ENCODE measurements at regions of chr5 and their contacts with region 1.

Region 1: DNA sequence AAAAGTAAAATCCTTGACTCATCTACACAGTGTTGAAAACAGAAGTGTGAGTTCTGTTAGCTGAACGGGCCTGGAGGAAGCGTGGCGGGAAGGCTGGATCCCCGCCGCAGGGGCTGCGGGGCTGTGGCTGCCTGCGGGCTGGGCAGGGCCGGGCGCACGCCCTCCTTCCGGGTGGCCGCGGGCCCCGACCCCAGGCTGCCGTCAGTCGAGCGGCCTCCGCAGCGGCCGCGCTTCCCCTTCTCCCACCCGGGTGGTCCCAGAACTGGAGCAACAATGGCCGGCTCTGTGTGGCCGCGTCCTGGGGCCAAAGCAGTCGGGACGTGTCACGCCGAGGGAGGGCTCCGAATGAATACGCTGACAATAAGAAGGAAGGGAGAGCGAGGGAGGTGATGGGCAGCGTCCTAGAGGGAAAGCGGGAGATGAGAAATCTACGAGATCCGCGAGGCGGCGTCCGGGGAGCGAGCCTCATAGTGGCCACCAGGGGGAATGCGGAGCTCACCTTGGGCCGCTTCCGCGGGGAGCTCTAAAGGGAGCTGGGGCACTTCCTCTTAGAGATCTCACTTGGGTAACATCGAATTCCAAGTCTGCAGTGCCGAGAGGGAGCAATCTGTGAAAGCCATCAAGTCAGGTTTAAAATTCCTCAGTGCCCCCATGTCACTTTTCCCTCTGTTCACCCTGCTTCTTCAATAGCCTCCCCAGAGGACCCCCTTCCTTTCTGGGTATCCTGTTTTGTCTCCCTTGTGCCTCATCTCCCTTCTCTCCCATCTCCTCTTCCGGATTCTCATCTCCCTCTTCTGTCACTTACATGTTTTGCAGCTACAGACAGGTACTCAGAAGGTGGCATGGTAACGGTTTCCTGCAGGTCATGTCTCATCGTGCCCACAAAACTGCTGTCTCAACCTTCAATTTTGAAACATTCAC is 83.9 kb downstream of the SLC1A3 start:
- DNase-seq: peak; percentile 81
- H3K4me3 ChIP-seq: peak overlapping the region; percentile 41 to 70 (median 55)
- H3K27ac ChIP-seq: peak overlapping the region; percentile 54
- H3K4me1 ChIP-seq: peaks cover 22% of the 10 kb centered on the region
- H3K27me3 ChIP-seq: no peaks in the 10 kb centered on the region
- CTCF ChIP-seq: peak; percentile 89 to 94

Region 2: GRCh38 chr5:36264202-36264760 is 426.0 kb before region 1 on chr5:
- CTCF ChIA-PET with region 1: no interaction called
- dilution Hi-C with region 1: no loop called
- in situ Hi-C with region 1: loop called (anchors 10 kb)
- intact Hi-C with region 1: loop called (anchors 2 kb)
- DNase-seq: no peak
- H3K4me3 ChIP-seq: no peak overlapping the region
- H3K27ac ChIP-seq: no peak overlapping the region
- H3K4me1 ChIP-seq: peaks cover 3% of the 10 kb centered on the region
- H3K27me3 ChIP-seq: no peaks in the 10 kb centered on the region
- CTCF ChIP-seq: no peak

Region 3: DNA sequence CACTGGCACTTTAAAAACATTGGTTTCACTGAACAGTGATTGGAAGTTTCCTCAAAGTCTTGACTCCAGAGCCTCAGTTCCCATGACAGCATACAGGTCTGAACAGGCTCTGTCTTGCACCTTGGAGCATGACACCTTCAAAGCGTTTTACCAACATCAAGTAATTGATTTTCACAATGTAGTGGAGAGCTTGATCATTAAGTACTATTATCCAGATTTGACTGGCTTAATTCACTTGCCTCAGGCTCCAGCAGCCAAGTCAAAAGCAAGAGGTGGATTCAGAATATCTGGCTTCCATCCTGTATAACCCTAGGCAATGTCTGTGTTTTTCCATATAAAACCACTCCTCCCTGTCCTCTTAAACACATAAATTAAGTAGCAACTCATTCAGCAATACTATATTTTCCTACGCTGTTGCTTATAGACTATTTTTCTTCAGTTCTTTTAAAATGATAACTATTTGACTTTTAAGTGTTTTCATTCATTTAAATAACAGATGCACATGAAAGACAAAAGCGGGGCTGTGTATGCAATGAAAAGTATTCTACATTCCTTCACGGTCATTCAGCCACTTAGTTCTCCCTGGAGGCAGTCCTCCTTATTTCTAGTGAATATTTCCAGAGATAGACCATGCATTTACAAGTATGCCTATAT is 237.8 kb before region 1 on chr5:
- CTCF ChIA-PET with region 1: no interaction called
- dilution Hi-C with region 1: no loop called
- in situ Hi-C with region 1: no loop called
- intact Hi-C with region 1: loop called (anchors 1 kb)
- DNase-seq: peak; percentile 89
- H3K4me3 ChIP-seq: peak overlapping the region in 2 of 3 experiments; percentile 12 to 23
- H3K27ac ChIP-seq: peak overlapping the region; percentile 87
- H3K4me1 ChIP-seq: peaks cover 53% of the 10 kb centered on the region
- H3K27me3 ChIP-seq: no peaks in the 10 kb centered on the region
- CTCF ChIP-seq: no peak

Region 4: DNA sequence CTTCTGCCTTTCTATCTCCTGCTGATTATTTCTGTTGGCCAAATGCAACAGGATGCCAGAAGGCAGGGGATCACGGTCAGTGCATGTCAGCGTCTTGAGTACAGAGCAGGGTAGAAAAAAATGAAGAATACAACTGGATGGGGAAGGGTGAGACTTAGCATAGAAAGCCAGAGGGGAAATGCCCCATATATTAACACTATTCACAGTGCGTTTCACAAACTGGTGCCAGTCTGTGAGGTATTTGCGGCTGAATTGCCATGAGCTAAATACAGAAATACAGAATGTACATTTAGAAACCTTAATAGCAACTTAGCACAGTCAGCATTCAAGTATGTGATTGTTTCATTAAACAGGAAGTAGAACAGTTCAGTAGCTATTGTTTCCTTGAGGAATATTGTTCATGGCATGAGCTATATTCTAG is 114.9 kb before region 1 on chr5:
- CTCF ChIA-PET with region 1: interaction called, 4 read pairs
- dilution Hi-C with region 1: no loop called
- in situ Hi-C with region 1: no loop called
- intact Hi-C with region 1: loop called (anchors 1 kb)
- DNase-seq: peak; percentile 80
- H3K4me3 ChIP-seq: no peak overlapping the region
- H3K27ac ChIP-seq: peak overlapping the region; percentile 84
- H3K4me1 ChIP-seq: peaks cover 43% of the 10 kb centered on the region
- H3K27me3 ChIP-seq: no peaks in the 10 kb centered on the region
- CTCF ChIP-seq: no peak

Region 5: DNA sequence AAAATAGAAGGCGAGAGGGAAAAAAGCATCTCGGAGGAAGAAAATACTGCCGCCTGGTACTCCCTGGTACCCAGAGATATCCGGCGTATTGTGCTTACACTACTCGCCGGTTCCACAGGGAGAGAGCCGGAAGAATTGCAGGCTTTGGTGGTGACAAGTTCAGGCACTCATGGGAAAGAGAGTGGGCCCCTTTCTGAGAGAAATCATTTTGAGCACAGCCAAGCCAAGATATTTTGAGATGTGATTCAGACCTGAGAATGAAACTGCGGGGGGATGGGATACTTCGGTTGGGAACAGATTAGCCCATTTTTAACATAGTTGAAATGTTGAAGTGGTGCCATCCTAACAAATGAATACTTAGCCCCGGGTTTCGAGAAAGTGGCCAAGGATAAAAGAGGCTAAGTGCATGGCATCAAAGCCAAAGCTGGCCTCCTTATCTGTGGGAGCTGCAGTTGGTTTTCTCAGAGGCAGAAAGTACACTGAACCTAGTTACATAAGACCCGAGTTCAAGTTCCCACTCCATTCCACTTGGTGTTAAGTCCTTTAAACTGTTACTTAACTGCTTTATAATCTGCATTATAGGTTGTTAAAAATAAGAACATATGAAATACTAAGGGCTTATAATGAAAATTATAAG is 21.2 kb before region 1 on chr5:
- CTCF ChIA-PET with region 1: no interaction called
- dilution Hi-C with region 1: no loop called
- in situ Hi-C with region 1: no loop called
- intact Hi-C with region 1: loop called (anchors 2 kb)
- DNase-seq: no peak
- H3K4me3 ChIP-seq: no peak overlapping the region
- H3K27ac ChIP-seq: no peak overlapping the region
- H3K4me1 ChIP-seq: peaks cover 20% of the 10 kb centered on the region
- H3K27me3 ChIP-seq: no peaks in the 10 kb centered on the region
- CTCF ChIP-seq: no peak

Region 6: GRCh38 chr5:36744773-36745589 is 54.7 kb after region 1 on chr5:
- CTCF ChIA-PET with region 1: no interaction called
- dilution Hi-C with region 1: no loop called
- in situ Hi-C with region 1: no loop called
- intact Hi-C with region 1: no loop called
- DNase-seq: peak; percentile 81
- H3K4me3 ChIP-seq: peak overlapping the region; percentile 66 to 71 (median 71)
- H3K27ac ChIP-seq: no peak overlapping the region
- H3K4me1 ChIP-seq: peaks cover 15% of the 10 kb centered on the region
- H3K27me3 ChIP-seq: no peaks in the 10 kb centered on the region
- CTCF ChIP-seq: no peak

Measured in mammary epithelial cell (primary cell).